Gastrocnemius medialis (tissue), 4 donors: ENCODE measurements at regions of chr7 and their contacts with region 1.

Region 1: DNA sequence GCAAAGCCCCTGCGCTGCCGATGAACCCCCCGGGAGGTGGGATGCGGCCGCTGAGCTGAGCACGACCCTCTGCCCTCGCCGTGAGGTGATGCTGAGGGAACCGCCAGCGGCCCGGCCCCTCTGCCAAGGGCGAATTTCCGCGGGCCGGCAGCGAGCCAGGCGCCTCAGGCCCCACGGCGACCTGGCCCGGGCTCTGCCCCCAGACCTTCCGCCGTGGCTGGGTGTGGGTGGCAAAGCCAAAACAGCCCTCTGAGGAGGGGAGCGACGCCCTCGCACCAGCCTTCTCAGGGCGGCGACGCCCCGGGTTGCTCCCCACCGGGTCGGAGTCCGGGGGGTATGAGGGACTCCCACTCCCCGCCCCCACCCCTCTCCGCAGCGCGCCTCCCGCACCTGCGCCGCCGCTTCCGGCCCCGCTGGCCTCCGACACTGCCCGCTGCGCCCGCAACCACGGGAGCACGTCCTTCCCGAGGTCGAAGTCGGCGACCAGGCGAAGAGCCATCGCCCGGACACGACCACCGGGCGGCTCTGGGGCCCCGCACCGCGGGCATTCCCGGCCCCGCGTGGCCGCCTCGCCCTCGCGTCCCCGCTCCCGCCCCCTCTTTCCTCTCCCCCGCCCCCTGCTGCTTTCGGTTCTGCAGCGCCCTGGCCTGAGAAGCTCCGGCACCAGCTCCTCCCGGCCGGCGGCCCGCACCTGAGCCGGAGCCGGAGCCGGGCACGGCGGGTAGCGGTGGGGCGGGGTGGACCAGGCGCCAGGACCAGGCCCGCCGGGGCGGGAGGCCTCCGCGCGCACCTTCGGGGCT is at the start of gene GSAP:
- DNase-seq: peak; percentile 45 to 54
- ATAC-seq: peak; percentile 83 to 84
- H3K4me3 ChIP-seq: peak within 1 kb of the TSS; percentile 84 to 92 (median 88)
- H3K27ac ChIP-seq: peak within 1 kb of the TSS; percentile 75 to 87 (median 82)
- H3K4me1 ChIP-seq: peaks cover 0 to 15% of the 10 kb centered on the region in 2 donors
- H3K27me3 ChIP-seq: no peaks in the 10 kb centered on the region
- CTCF ChIP-seq: peak in 1 of 5 experiments; percentile 35
- POLR2A ChIP-seq: no peak
- total RNA-seq, gene GSAP: 1.2 to 8.3 (median 2.5) TPM

Region 2: DNA sequence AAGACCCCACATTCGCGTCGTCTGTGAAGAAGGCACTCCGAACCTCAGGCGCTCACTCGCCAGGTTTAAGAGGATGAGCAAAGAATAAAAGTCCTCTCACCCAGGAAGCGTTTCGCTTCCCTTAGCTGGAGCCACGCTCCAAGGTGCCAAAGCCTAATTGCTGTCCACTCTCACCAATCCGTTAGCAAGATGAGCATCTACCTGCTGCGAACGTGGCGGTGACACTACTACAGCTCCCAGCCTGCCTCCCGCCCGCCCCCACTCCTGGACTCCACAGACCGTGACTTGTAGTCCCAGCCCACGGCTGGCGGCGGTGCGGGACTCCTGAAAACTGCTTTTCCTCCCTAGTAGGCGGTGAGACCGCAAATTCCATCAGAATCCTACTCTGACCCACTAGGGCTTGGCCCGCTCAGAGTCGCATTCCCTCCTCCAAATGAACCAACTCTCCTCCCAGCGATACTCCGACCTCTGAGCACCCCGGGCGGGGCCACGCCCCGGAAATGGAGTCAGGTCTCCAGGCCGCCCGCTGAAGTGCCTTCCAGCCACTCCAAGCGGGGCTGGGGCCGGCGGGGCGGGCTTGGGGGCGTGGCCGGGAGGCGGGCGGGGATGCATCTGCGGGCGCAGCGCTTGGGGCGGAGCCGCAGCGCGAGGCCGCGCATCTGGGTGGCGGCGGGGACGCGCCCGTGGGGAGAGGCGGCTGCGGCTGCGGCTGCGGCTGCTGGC is 120.6 kb after region 1 on chr7:
- in situ Hi-C with region 1: no loop called
- intact Hi-C with region 1: loop called (anchors 2 kb)
- DNase-seq: peak; percentile 96 to 97
- ATAC-seq: peak; percentile 84 to 87
- H3K4me3 ChIP-seq: peak overlapping the region; percentile 84 to 99 (median 88)
- H3K27ac ChIP-seq: peak overlapping the region; percentile 89 to 99 (median 92)
- H3K4me1 ChIP-seq: peaks cover 16 to 23% of the 10 kb centered on the region in 2 donors
- H3K27me3 ChIP-seq: no peaks in the 10 kb centered on the region
- CTCF ChIP-seq: no peak
- POLR2A ChIP-seq: peak; percentile 89 to 96